Activated CD8-positive, alpha-beta T cell treated with anti-CD3 and anti-CD28 coated beads, Interleukin-2, amount 10 ng/mL, durations not matched to agents 7 days and 5 days (primary cell): ENCODE measurements at regions of chr3 and their contacts with region 1.

Region 1: DNA sequence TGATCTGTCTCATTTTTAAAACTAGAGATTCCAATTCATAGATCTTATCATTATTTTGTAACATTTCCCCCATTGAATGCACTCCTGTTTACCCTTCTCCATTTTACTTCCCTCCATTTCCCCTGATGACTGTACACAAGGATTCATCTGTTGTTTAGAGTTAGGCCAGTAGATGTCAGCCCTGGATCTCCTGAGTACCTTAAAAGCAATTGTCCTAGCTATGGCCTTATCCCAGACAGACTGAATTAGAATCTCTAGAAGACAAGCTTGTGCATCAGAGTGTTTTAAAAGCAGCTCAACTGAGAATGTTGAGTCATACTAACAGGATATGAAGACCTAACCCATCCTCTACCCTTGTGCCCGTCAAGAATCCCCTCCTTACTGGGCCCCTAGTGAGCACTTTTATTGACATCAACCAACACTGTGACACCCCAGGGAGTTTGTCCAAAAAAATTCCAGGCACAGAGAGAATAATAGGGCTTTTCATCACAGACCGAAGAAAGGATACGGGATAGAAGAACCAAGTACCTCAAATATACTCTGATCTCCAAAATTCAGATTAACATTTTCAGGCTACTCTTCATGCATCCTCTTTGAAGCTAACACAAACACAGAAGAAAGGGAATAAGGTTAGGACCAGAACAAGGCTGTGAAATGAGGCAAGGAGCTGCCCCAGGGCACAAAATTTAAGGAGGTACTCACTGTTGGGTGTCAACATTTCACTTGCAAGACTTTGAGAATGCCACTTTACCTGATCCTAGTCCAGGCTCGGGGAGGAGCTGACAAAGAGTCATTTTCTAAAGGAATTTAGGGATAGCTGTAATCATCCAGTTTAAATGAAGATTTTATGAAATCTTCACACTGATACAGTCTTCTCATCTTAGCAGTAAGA is 17.1 kb downstream of the ZBED2 start:
- DNase-seq: no peak
- ATAC-seq: peak; percentile 87
- H3K4me3 Mint-ChIP-seq: no peak overlapping the region
- H3K27ac Mint-ChIP-seq: peak overlapping the region; percentile 71
- H3K4me1 Mint-ChIP-seq: peaks cover 76% of the 10 kb centered on the region
- H3K27me3 Mint-ChIP-seq: no peaks in the 10 kb centered on the region

Region 2: GRCh38 chr3:111594205-111594604 is 16.2 kb after region 1 on chr3:
- CTCF ChIA-PET with region 1: interaction called, 14 read pairs
- POLR2A ChIA-PET with region 1: interaction called, 3 read pairs
- DNase-seq: no peak
- ATAC-seq: peak; percentile 48
- H3K4me3 Mint-ChIP-seq: peak overlapping the region; percentile 29
- H3K27ac Mint-ChIP-seq: peak overlapping the region; percentile 79
- H3K4me1 Mint-ChIP-seq: peaks cover 72% of the 10 kb centered on the region
- H3K27me3 Mint-ChIP-seq: no peaks in the 10 kb centered on the region

Region 3: DNA sequence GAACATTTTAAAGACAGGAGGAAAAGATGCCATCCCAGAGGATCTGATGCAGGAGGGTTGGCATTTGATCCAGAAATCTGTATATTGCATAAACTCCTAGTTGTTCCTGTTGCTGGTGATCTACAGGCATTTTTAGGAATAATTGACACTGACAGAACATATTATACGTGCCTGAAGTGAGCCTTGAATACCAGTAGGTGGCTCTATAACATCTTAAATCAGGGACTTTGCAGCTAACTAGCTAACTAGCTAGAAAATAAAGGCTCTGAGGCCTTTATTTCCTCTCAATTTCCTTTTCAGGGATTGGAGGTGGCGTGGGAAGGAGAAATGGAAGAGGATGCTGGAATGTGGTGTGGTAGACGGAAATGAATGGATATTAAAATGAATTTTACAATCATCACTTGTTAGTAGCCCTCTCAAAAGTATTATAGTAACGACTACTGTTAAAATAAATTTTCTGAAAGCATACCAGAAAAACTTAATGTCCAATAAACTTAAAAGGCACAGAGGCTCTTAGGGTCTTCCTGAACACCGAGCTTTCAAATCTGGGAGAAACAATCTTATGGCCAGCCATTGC is 91.0 kb after region 1 on chr3:
- CTCF ChIA-PET with region 1: interaction called, 19 read pairs
- POLR2A ChIA-PET with region 1: no interaction called
- DNase-seq: no peak
- ATAC-seq: peak; percentile 32
- H3K4me3 Mint-ChIP-seq: no peak overlapping the region
- H3K27ac Mint-ChIP-seq: peak overlapping the region; percentile 75
- H3K4me1 Mint-ChIP-seq: peaks cover 84% of the 10 kb centered on the region
- H3K27me3 Mint-ChIP-seq: no peaks in the 10 kb centered on the region

Region 4: GRCh38 chr3:111691293-111691909 is 113.4 kb after region 1 on chr3:
- CTCF ChIA-PET with region 1: interaction called, 24 read pairs
- POLR2A ChIA-PET with region 1: no interaction called
- DNase-seq: no peak
- ATAC-seq: no peak
- H3K4me3 Mint-ChIP-seq: no peak overlapping the region
- H3K27ac Mint-ChIP-seq: peak overlapping the region; percentile 53
- H3K4me1 Mint-ChIP-seq: peaks cover 68% of the 10 kb centered on the region
- H3K27me3 Mint-ChIP-seq: no peaks in the 10 kb centered on the region

Region 5: DNA sequence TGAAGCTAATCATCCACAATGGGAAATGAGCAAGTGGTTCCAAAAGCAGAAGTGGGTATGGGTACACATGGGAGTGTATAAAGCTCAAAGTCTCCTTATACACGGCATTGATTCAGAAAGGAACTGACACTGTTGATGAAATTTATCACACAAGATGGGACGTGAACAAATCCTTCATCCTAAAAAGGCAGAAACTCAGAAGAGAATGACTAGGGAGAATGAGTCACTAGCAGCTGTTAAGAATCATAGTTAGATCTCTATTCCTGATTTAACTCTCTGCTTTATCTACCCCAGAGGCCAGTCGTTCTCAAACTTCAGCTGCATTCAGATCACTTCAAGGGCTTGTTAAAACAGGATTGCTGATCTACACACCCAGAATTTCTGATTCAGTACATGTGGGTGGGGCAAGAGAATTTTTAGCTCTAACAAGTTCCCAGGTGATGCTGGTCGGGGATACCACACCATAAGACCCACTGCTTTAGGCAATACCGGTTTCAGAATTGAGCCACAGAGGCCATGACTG is 183.3 kb after region 1 on chr3:
- CTCF ChIA-PET with region 1: no interaction called
- POLR2A ChIA-PET with region 1: no interaction called
- DNase-seq: no peak
- ATAC-seq: no peak
- H3K4me3 Mint-ChIP-seq: no peak overlapping the region
- H3K27ac Mint-ChIP-seq: no peak overlapping the region
- H3K4me1 Mint-ChIP-seq: no peaks in the 10 kb centered on the region
- H3K27me3 Mint-ChIP-seq: no peaks in the 10 kb centered on the region